Dorsolateral prefrontal cortex (tissue), 120 donors: ENCODE measurements at regions of chr10 and their contacts with region 1.

Region 1: DNA sequence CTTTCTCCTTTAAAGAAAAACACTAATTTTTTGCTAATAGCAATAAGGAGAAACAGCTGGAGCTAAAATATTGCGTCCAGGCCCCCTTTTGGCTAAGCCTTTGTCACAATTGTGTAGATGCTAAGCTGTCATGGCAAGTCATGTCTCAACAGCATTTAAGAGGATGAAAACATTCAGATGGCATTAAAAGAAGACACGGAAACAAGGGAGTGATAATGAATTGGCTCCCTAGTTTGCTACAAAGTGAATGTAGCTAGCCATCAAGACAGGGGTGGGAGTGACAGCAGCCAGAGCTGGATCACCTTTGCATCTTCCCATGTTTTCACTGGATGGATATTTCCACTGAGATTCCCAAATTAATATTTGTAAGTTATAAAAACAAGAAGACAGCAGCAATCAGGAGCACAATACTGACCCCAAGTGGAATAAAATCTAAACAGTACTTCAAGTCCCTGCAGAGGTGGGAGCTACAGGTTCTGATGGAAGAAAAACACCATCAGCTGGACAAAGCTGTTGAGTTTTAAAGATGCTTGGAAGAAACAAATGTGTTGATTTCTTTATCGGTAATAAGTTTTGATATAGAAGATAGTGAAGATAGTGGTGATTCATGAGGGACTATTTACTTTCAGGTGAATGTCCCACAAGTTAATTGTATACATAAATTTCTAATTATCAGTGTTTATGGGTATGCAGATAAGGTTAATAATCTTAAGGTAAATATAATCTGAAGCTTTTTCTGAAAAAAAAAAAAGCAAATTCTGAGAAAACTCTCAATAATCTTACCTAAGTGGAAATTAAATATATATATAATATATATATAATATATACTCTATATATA is 129.4 kb downstream of the SLC16A9 start:
- DNase-seq: no peak
- H3K4me3 ChIP-seq: peak overlapping the region in 1 of 59 donors; percentile 22
- H3K27ac ChIP-seq: peak overlapping the region in 33 of 59 donors; percentile 2 to 81 (median 46)
- H3K27me3 ChIP-seq: no peaks in the 10 kb centered on the region
- CTCF ChIP-seq: peak; percentile 35 to 86 (median 72)

Region 2: GRCh38 chr10:59234816-59235429 is 345.3 kb before region 1 on chr10:
- intact Hi-C with region 1: loop called (anchors 2 to 5 kb)
- DNase-seq: no peak
- H3K4me3 ChIP-seq: no peak overlapping the region
- H3K27ac ChIP-seq: peak overlapping the region in 39 of 59 donors; percentile 0 to 84 (median 47)
- H3K27me3 ChIP-seq: no peaks in the 10 kb centered on the region
- CTCF ChIP-seq: peak; percentile 34 to 83 (median 68)

Region 3: GRCh38 chr10:59362144-59362958 is 217.9 kb before region 1 on chr10 and contains the start of gene FAM13C:
- intact Hi-C with region 1: loop called in 1 of 2 experiments (anchors 10 kb)
- DNase-seq: peak; percentile 71 to 87 (median 83)
- H3K4me3 ChIP-seq: peak within 1 kb of the TSS; percentile 48 to 87 (median 74)
- H3K27ac ChIP-seq: peak within 1 kb of the TSS; percentile 92 to 99 (median 98)
- H3K27me3 ChIP-seq: no peaks in the 10 kb centered on the region
- CTCF ChIP-seq: peak in 14 of 56 donors; percentile 6 to 38 (median 14)
- total RNA-seq, gene FAM13C: 54.6 to 219 (median 93.7) TPM